ENCODE measurements at regions of chr14 and their contacts with region 1.

Region 1: GRCh38 chr14:95993768-95994592 is 45.2 kb upstream of the C14orf132 start:
- DNase-seq: peak; percentile 52
- H3K4me3 Mint-ChIP-seq: no peak overlapping the region
- H3K27ac Mint-ChIP-seq: no peak overlapping the region
- H3K4me1 Mint-ChIP-seq: no peaks in the 10 kb centered on the region
- H3K27me3 Mint-ChIP-seq: peaks cover 37% of the 10 kb centered on the region

Region 2: GRCh38 chr14:95774265-95775160 is 219.5 kb before region 1 on chr14:
- CTCF ChIA-PET with region 1: no interaction called
- intact Hi-C with region 1: loop called (anchors 10 kb)
- DNase-seq: peak; percentile 76
- H3K4me3 Mint-ChIP-seq: no peak overlapping the region
- H3K27ac Mint-ChIP-seq: no peak overlapping the region
- H3K4me1 Mint-ChIP-seq: peaks cover 2% of the 10 kb centered on the region
- H3K27me3 Mint-ChIP-seq: peaks cover 7% of the 10 kb centered on the region

Region 3: DNA sequence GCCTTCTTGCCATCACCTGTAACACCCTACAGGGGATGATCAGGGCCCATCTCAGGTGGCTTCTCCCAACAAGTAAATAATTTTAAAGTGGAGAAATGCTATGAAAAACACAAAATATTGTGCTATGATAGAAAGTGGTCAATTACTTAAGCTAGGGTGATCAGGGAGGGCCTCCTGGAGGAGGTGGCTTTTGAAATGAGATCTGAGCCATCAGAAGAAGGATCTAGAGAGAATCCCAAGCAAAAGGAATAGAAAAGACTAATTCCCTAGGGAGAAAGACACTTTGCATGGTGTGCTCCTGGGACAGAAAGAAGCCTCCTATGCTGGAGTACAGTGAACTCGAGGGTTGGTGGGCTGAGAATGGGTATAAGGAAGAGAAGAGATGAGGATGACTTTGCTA is 37.7 kb after region 1 on chr14:
- CTCF ChIA-PET with region 1: no interaction called
- intact Hi-C with region 1: no loop called
- DNase-seq: no peak
- H3K4me3 Mint-ChIP-seq: no peak overlapping the region
- H3K27ac Mint-ChIP-seq: no peak overlapping the region
- H3K4me1 Mint-ChIP-seq: peaks cover 17% of the 10 kb centered on the region
- H3K27me3 Mint-ChIP-seq: no peaks in the 10 kb centered on the region

Region 4: DNA sequence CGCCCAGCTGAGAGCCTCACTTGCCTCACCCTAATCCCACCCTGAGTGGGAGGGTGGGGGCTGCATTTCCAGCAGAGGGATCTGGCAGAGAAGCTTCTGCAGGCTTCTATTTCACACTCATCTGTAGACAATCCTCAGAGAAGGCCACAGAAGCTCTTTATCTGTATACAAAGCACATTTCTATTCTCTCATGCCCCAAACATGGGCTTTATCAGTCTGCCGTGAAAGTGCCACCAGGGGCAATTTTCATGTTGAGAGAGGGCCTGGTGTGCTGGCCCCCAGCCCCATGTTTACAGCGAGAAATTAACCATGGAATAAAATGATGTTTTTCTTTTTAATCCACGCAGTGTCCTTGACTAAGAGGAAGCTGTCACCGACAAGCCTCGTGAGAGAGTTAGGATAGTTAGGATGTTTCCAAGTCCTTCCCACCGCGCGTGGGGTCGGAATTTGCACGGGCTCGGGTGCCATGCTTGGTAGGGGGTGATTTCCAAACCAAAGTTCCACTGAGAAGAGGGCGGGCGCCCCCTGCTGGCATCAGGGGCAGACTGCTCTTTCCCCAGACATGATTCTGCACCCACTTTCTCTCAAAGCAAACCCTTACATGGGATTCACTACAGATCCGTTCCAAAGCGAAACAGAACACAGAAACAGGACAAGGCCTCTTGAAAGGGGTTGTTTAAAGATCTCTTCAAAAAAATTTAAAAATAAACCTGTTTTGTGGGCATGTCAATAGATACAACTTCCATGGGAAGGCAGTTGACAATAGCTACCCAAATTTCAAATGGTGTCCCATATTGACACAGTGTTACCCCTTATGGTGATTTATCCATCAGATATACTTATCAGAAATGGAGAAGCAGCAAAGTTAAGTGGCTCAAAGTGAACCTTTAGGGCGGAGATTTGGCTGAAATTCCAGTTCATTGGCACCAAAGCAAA is 281.5 kb after region 1 on chr14:
- CTCF ChIA-PET with region 1: no interaction called
- intact Hi-C with region 1: loop called (anchors 2 kb)
- DNase-seq: peak; percentile 83
- H3K4me3 Mint-ChIP-seq: no peak overlapping the region
- H3K27ac Mint-ChIP-seq: no peak overlapping the region
- H3K4me1 Mint-ChIP-seq: peaks cover 2% of the 10 kb centered on the region
- H3K27me3 Mint-ChIP-seq: no peaks in the 10 kb centered on the region